CD8-positive, alpha-beta memory T cell (primary cell): ENCODE measurements at regions of chr1 and their contacts with region 1.

Region 1: GRCh38 chr1:107782217-107782845 is 182.6 kb downstream of the VAV3 start:
- DNase-seq: peak in 3 of 5 donors; percentile 16 to 63 (median 58)
- H3K4me3 ChIP-seq: no peak overlapping the region
- H3K4me3 Mint-ChIP-seq: no peak overlapping the region
- H3K27ac ChIP-seq: no peak overlapping the region
- H3K27ac Mint-ChIP-seq: no peak overlapping the region
- H3K4me1 ChIP-seq: peaks cover 28% of the 10 kb centered on the region
- H3K4me1 Mint-ChIP-seq: peaks cover 42 to 45% (median 43%) of the 10 kb centered on the region in 3 donors
- H3K27me3 ChIP-seq: no peaks in the 10 kb centered on the region
- H3K27me3 Mint-ChIP-seq: no peaks in the 10 kb centered on the region

Region 2: GRCh38 chr1:107963601-107964335 is 181.4 kb after region 1 on chr1:
- CTCF ChIA-PET with region 1: interaction called, 16 read pairs
- POLR2A ChIA-PET with region 1: interaction called, 4 read pairs
- DNase-seq: peak; percentile 3 to 67 (median 59)
- H3K4me3 ChIP-seq: peak overlapping the region; percentile 88
- H3K4me3 Mint-ChIP-seq: peak overlapping the region; percentile 90 to 100 (median 98)
- H3K27ac ChIP-seq: peak overlapping the region; percentile 78
- H3K27ac Mint-ChIP-seq: peak overlapping the region; percentile 90 to 98 (median 96)
- H3K4me1 ChIP-seq: peaks cover 17% of the 10 kb centered on the region
- H3K4me1 Mint-ChIP-seq: peaks cover 37 to 46% (median 43%) of the 10 kb centered on the region in 3 donors
- H3K27me3 ChIP-seq: no peaks in the 10 kb centered on the region
- H3K27me3 Mint-ChIP-seq: peaks cover 3% of the 10 kb centered on the region in 2 donors

Region 3: DNA sequence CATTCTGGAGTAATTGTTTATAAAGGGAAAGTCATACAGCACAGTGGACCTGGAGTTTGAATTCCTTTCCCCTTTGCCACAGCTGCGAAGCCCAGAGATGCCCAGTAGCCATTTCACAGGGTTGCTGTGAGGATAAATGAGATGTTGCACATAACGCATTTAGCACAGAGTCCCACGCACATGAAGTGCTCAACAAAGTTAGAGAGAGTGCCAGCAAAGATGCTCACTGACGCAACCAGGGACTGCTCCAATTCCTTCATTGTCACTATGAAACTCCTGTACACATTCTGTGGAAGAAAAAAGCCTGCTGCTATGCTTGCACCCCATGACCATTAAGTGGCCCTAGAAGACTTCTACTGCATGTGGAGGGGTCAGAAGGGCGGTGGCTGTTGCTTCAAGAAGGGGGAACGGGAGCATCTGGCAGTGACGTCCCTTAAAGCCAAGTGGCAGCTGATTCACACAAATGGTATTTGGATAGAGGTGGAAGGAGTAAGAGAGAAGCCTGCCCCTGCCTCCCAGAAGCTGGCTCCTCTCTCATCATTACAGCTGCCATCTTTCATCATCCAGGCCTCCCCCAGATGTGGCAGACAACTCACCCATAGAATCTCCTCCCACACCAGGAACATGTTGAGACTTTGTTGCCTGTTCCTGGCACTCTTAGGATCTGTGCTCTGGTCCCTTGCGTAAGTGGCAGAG is 209.2 kb after region 1 on chr1:
- CTCF ChIA-PET with region 1: no interaction called
- POLR2A ChIA-PET with region 1: no interaction called
- DNase-seq: no peak
- H3K4me3 ChIP-seq: no peak overlapping the region
- H3K4me3 Mint-ChIP-seq: no peak overlapping the region
- H3K27ac ChIP-seq: no peak overlapping the region
- H3K27ac Mint-ChIP-seq: peak overlapping the region in 1 of 8 donors; percentile 59
- H3K4me1 ChIP-seq: no peaks in the 10 kb centered on the region
- H3K4me1 Mint-ChIP-seq: no peaks in the 10 kb centered on the region
- H3K27me3 ChIP-seq: no peaks in the 10 kb centered on the region
- H3K27me3 Mint-ChIP-seq: peaks cover 3 to 4% of the 10 kb centered on the region in 2 donors

Region 4: DNA sequence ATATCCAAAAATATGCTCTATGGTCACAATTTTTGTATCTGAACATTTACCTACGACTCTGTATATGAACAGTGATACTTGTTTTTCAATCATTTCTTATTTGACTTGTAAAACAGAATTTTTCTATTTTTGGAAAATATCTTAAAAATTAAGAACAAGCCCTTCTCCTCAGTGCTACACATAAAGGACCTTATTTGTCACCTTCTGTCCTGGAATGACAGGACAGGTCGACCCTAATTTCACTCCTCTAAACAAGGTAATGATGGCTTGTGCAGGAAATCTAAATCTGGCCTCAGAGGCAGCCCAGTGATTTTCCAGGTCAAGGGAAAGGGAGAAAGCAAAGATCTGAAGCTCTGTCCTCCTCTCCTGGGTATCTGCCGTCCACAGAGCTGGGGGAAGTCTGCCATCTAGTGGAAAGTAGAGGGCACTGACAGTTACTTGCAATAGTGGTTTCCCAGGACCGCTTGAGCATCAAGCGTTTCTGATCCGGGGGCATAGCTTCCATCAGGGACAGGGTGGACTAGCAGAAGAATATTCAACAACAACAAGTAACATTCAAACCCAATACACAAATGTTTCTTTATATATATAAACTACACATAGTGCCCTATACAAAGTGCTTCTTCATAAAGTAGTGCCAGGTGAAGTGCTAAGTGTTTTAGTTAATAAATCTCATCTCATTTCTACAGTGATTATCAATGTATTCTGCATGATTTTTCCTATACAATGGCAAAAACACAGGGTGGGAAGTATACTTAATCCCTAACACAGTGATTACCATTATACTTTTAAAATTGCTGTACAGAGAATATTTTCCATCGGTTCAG is 343.2 kb after region 1 on chr1:
- CTCF ChIA-PET with region 1: interaction called, 243 read pairs
- POLR2A ChIA-PET with region 1: interaction called, 4 read pairs
- DNase-seq: peak; percentile 30 to 73 (median 64)
- H3K4me3 ChIP-seq: no peak overlapping the region
- H3K4me3 Mint-ChIP-seq: no peak overlapping the region
- H3K27ac ChIP-seq: no peak overlapping the region
- H3K27ac Mint-ChIP-seq: peak overlapping the region in 3 of 8 donors; percentile 19 to 66 (median 56)
- H3K4me1 ChIP-seq: no peaks in the 10 kb centered on the region
- H3K4me1 Mint-ChIP-seq: peaks cover 5 to 9% (median 5%) of the 10 kb centered on the region in 3 donors
- H3K27me3 ChIP-seq: no peaks in the 10 kb centered on the region
- H3K27me3 Mint-ChIP-seq: peaks cover 1 to 4% of the 10 kb centered on the region in 2 donors